Activated naive CD4-positive, alpha-beta T cell treated with anti-CD3 and anti-CD28 coated beads for 36 hours (primary cell): ENCODE measurements at regions of chr12 and their contacts with region 1.

Region 1: DNA sequence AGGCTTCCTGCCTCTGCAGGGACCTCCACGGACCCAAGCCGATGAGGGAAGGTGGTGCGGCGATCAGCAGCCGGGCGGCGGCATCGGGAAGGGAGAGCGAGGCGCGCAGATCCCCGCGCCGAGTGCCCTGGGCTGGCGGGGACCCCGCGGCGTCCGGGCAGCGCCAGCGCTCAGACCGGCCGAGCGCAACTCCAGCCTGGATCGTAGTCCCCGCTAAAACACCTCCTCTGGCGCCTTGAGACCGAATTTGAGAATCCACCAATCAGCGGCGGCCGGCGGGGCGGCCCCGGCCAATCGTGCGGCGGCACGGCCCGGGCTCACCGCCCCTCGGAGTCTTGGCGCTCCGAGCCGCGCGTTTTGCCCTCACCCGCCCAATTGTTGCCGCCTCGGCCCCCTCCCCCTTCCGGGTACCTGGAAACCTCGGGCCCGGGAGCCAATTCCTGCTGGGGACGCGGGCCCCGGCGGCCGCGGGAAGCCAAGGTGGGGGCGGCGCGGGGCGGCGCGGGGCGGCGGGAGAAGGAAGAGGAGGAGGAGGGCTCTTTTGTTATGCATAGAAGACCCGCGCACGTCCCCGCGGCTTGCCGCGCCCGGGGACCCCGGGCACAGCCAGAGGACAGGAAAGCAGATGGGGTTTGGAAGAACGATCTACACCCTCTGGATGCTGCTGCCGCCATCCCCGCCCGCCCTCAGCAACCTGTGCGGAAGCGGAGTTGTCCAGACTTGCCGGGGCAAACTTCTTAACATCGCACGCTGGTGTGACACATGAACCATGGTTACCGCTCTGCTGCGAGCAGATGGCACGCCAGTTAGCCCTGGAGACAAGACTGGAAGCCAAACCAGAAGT is at the start of gene E2F7:
- DNase-seq: peak; percentile 90
- H3K4me3 Mint-ChIP-seq: peak within 1 kb of the TSS; percentile 79
- H3K27ac Mint-ChIP-seq: peak within 1 kb of the TSS; percentile 47
- H3K4me1 Mint-ChIP-seq: peaks cover 10% of the 10 kb centered on the region
- H3K27me3 Mint-ChIP-seq: peaks cover 46% of the 10 kb centered on the region
- total RNA-seq, gene E2F7: 9.6 to 9.9 TPM

Region 2: GRCh38 chr12:75511116-75512048 is 1554.2 kb before region 1 on chr12 and contains the start of gene KRR1:
- CTCF ChIA-PET with region 1: no interaction called
- intact Hi-C with region 1: loop called (anchors 10 kb)
- DNase-seq: peak; percentile 95
- H3K4me3 Mint-ChIP-seq: peak within 1 kb of the TSS; percentile 95
- H3K27ac Mint-ChIP-seq: peak within 1 kb of the TSS; percentile 98
- H3K4me1 Mint-ChIP-seq: peaks cover 29% of the 10 kb centered on the region
- H3K27me3 Mint-ChIP-seq: no peaks in the 10 kb centered on the region
- total RNA-seq, gene KRR1: 81.1 to 83.9 TPM

Region 3: DNA sequence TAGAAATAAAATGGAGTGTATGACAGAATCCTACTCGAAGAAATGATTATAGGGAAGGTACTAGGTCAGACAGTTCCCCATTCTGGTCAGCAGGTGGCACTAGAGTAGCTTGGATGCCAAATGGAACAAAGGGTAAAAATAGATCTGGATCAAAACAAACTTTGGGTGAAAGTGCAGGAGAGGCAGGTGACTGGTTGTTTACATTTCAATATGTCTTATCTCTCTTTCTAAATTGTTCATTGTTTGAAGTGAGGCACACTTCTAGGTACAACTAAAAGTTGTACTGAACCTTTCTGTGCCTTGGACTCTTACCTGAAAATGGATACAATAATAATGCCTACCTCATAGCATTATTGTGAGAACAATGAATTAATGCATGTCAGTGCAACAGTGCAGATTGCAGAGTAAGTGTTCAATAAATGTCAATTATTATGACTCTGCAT is 444.0 kb before region 1 on chr12:
- CTCF ChIA-PET with region 1: no interaction called
- intact Hi-C with region 1: loop called (anchors 1 kb)
- DNase-seq: peak; percentile 83
- H3K4me3 Mint-ChIP-seq: no peak overlapping the region
- H3K27ac Mint-ChIP-seq: no peak overlapping the region
- H3K4me1 Mint-ChIP-seq: peaks cover 4% of the 10 kb centered on the region
- H3K27me3 Mint-ChIP-seq: no peaks in the 10 kb centered on the region

Region 4: DNA sequence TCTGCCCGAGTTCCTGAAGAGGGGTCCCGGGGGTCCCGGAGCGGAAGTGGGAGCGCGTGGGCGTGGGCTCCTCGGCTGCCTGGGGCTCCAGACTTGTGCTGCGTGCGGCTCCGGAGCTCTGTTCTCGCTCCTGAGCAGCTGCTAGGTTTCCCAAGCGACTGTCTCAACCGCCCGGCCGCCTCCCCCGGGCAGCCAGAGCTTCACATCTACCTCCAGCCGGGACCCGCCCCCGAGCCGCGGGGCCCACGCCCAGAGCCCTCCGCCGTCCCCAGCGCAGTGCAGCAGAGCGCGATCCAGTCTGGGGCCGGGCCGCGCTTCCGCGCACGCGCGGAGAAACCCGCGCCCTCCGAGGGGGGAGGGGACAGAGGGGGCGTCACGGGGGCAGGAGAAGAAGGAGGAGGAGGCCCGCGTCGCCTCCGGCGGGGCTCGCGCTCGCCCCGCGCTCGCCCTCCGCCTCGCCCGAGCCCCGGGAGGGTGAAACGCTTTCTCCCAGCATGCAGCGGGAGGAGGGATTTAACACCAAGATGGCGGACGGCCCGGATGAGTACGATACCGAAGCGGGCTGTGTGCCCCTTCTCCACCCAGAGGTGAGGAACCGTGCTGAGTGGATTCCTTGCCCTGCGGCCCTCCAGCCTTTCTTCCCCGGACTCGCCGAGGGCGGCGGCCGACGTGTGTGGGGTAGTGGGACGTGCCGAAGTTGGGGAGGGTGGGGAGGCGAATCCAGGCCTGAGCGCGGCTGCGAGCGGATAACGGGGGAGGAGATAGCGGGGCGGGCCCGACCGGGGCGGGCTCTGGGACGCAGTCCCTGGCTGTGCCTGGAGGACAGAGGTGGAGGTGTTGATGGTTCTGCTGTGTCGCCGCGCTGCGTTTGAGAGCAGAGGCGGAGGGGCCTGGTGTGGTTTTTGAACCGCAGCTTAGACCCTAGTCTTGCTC is 301.6 kb before region 1 on chr12 and contains the start of gene ZDHHC17:
- CTCF ChIA-PET with region 1: no interaction called
- intact Hi-C with region 1: loop called (anchors 5 kb)
- DNase-seq: peak; percentile 88
- H3K4me3 Mint-ChIP-seq: peak within 1 kb of the TSS; percentile 98
- H3K27ac Mint-ChIP-seq: peak within 1 kb of the TSS; percentile 91
- H3K4me1 Mint-ChIP-seq: peaks cover 38% of the 10 kb centered on the region
- H3K27me3 Mint-ChIP-seq: no peaks in the 10 kb centered on the region
- total RNA-seq, gene ZDHHC17: 19.1 to 22.2 TPM

Region 5: DNA sequence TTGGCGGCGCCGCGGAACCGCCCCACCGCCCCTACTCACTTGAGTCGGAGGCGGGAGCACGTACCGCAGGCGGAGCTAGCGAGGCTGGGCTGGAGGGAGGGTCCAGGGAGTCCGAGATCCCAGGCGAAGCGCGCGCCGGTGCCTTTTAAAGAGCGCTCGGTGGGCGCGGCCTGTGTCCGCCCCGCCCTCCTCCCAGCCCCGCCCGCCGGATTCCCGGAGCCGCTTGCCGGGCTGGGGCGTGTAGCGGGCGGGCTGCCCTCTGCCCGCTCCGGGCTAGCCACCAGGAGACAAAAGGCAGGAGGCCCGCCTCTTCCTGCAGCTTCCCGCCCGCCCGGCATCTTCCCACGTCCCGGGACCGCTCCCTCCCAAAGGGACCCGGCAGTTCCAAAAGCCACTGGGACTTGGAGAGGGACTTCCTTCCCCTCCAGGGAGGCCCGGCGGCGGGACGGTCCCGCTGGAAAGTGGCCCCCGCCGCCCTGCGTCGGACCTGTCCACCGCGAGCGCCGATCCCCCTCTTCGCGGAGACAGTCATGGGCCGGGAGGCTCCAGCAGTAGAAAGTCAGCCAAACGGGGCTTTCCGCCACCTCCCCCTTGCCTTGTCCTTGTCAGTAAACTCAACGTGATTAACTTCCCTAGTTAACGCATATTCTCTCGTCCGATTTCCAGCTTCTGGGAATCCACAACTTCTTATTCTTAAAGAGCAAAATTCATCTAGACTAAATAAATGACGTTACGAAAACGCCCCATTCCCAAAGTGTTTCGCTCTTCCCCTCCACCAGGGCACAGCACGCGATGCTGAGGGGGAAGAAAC is 186.5 kb before region 1 on chr12 and contains the start of gene CSRP2:
- CTCF ChIA-PET with region 1: no interaction called
- intact Hi-C with region 1: loop called (anchors 2 kb)
- DNase-seq: peak; percentile 80
- H3K4me3 Mint-ChIP-seq: peak within 1 kb of the TSS; percentile 87
- H3K27ac Mint-ChIP-seq: peak within 1 kb of the TSS; percentile 50
- H3K4me1 Mint-ChIP-seq: peaks cover 3% of the 10 kb centered on the region
- H3K27me3 Mint-ChIP-seq: peaks cover 36% of the 10 kb centered on the region
- total RNA-seq, gene CSRP2: 0.62 to 0.86 TPM

Region 6: DNA sequence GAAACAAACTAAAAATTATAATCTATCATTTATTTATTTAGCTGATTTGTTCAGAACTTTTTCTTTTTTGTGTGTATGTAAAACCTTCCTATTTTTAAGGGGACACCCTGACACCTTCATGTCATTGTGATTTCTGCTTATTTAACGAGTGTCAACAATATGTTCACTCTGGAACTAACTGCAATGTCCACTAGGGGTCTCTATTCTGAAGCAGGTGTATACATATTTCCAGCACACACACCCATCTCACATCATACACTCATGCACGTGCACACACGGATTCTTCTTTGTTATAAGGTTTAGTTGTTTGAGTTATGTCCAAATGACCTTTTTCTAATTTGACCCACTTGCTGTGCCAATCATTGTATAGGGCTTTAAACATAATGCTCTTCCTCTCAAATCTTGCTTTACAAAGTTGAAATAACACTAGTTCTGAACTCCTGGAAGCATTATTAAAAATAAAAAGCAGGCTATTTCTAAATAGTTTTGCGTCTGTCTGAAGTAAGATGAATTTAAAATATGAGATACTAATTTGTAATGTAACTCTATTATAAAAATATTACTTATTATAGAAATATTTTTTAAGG is 15.7 kb before region 1 on chr12:
- CTCF ChIA-PET with region 1: interaction called, 10 read pairs
- intact Hi-C with region 1: loop called (anchors 1 kb)
- DNase-seq: no peak
- H3K4me3 Mint-ChIP-seq: no peak overlapping the region
- H3K27ac Mint-ChIP-seq: no peak overlapping the region
- H3K4me1 Mint-ChIP-seq: no peaks in the 10 kb centered on the region
- H3K27me3 Mint-ChIP-seq: no peaks in the 10 kb centered on the region

Region 7: DNA sequence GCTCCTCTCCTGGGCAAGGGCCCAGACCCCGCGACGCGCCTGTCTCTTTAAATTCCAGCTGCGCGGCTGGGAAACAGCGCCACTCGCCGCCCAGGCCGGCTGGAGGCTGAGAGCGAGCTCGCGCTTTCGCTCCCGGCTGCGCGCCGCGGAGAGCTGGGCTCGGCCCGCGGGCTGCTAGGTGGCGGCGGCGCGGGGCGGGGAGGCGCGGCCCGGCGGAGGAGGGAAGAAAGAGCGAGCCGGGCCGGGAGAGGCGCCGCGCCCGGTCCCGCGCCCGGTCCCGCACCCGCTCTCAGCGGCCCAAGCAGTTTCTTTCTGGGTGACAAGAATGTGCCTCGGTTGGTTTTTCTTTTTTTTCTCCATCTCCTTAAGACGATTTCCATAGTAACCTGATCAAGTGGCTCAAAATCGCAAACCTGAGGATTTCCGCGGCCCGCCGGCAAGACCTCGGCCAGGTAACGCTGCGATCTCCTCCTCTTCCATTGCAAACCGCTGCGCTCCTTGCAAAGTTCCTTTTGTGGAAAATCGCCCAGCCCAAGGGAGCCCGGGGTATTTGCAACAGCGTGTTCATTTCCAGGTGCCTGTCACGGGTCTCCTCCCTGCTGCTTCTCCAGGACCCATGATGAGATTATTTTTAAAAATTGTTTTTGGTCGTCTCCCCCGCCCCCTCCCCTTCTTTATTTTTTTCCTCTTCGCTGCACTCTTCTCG is 259.3 kb after region 1 on chr12:
- CTCF ChIA-PET with region 1: no interaction called
- intact Hi-C with region 1: loop called (anchors 5 kb)
- DNase-seq: peak; percentile 41
- H3K4me3 Mint-ChIP-seq: peak overlapping the region; percentile 58
- H3K27ac Mint-ChIP-seq: no peak overlapping the region
- H3K4me1 Mint-ChIP-seq: peaks cover 9% of the 10 kb centered on the region
- H3K27me3 Mint-ChIP-seq: peaks cover 52% of the 10 kb centered on the region